Activated B cell treated with CpG ODN at 0.5 μM for 24 hours (primary cell): ENCODE measurements at regions of chr2 and their contacts with region 1.

Region 1: DNA sequence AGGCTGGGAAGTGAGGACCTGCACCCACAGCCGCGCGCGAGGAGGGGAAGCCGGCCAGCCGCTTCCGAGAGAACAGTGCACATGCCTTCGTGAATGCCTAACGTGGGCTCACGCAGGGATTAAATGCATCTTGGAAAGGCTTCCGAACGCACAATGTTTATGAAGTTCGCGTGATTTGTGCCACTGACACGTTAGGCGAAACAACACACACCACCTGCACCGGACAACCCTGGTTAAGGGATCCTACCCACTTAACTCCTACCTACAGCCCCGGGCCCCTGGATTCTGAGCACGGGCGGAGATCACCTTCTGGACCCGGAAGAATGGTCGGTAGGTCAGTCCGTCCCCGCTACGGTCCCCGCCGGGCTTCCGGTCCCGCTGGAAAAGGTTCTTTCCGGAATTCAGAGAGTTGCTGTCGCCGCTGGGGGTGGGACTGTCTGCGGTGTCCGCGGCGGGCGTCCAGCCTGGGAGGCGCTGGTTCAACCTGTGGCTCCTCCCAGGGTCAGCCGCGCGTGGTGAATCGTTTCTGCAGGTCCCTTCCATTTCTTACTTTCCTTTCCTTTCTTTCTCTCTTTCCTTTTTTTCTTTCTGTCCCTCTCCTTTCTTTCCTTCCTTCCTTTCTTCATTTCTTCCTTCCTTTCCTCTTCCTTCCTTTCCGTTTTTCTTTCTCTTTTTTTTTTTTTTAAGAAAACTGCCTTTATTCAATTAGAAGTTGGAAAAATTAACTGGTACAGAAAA is at the start of gene MTIF2:
- DNase-seq: peak; percentile 88
- ATAC-seq: peak; percentile 96
- H3K4me3 Mint-ChIP-seq: peak within 1 kb of the TSS; percentile 94
- H3K27ac Mint-ChIP-seq: peak within 1 kb of the TSS; percentile 94
- H3K4me1 Mint-ChIP-seq: peaks cover 13% of the 10 kb centered on the region
- H3K27me3 Mint-ChIP-seq: no peaks in the 10 kb centered on the region
- CTCF ChIP-seq: no peak
- total RNA-seq, gene MTIF2: 37.8 and 40.4 TPM in 2 replicates

Region 2: GRCh38 chr2:54755641-54756326 is 513.3 kb before region 1 on chr2:
- CTCF ChIA-PET with region 1: no interaction called
- POLR2A ChIA-PET with region 1: no interaction called
- intact Hi-C with region 1: loop called (anchors 5 kb)
- DNase-seq: no peak
- ATAC-seq: peak; percentile 67
- H3K4me3 Mint-ChIP-seq: peak overlapping the region; percentile 74
- H3K27ac Mint-ChIP-seq: peak overlapping the region; percentile 92
- H3K4me1 Mint-ChIP-seq: peaks cover 50% of the 10 kb centered on the region
- H3K27me3 Mint-ChIP-seq: no peaks in the 10 kb centered on the region
- CTCF ChIP-seq: no peak

Region 3: DNA sequence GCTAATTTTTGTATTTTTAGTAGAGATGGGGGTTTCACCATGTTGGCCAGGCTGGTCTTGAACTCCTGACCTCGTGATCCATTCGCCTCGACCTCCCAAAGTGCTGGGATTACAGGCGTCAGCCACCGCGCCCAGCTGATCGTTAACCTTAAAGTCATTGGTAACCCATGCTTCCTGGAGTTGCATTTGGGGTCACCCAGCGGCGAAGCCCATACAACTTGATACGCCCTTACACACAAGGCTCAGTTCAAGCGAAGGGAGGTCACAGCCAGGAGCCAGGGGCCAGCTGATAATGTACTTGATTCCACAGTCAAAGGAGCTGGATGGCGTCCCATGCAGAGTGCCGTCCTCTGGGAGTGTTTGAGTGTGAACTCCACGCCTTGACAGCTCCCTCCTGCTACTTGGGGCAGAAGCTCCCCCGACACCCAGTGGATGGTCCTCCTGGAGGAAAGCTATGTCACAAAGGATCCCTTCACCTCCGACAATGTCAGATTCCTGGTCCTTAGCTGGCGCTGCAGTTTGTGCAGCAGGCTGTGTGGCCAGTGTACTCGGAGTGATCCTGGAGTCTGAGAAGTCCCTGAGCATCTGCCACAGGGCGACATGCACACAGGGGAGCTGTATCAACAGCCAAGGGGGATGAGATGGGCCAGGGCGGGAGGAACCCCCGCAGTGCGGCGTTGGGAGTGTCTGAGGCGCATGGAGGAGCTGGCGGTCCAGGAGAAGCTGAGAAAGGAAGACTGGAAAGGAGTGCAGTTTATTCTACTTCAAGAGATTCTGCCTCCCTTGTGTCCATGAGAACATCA is 44.9 kb before region 1 on chr2:
- CTCF ChIA-PET with region 1: no interaction called
- POLR2A ChIA-PET with region 1: interaction called, 13 read pairs
- intact Hi-C with region 1: loop called (anchors 1 kb)
- DNase-seq: no peak
- ATAC-seq: no peak
- H3K4me3 Mint-ChIP-seq: peak overlapping the region; percentile 81
- H3K27ac Mint-ChIP-seq: peak overlapping the region; percentile 87
- H3K4me1 Mint-ChIP-seq: peaks cover 28% of the 10 kb centered on the region
- H3K27me3 Mint-ChIP-seq: no peaks in the 10 kb centered on the region
- CTCF ChIP-seq: no peak

Region 4: GRCh38 chr2:55232084-55232862 is 36.8 kb before region 1 on chr2 and contains the starts of genes CLHC1 and RPS27A:
- CTCF ChIA-PET with region 1: no interaction called
- POLR2A ChIA-PET with region 1: interaction called, 19 read pairs
- intact Hi-C with region 1: loop called (anchors 1 kb)
- DNase-seq: peak; percentile 92
- ATAC-seq: peak; percentile 86
- H3K4me3 Mint-ChIP-seq: peak within 1 kb of the TSS; percentile 99
- H3K27ac Mint-ChIP-seq: peak within 1 kb of the TSS; percentile 98
- H3K4me1 Mint-ChIP-seq: peaks cover 58% of the 10 kb centered on the region
- H3K27me3 Mint-ChIP-seq: no peaks in the 10 kb centered on the region
- CTCF ChIP-seq: no peak
- total RNA-seq, gene CLHC1: 7.1 and 10.5 TPM in 2 replicates
- total RNA-seq, gene RPS27A: 1,833 and 2,316 TPM in 2 replicates

Region 5: GRCh38 chr2:55282110-55282917 is 13.2 kb after region 1 on chr2:
- CTCF ChIA-PET with region 1: no interaction called
- POLR2A ChIA-PET with region 1: interaction called, 14 read pairs
- intact Hi-C with region 1: loop called (anchors 1 kb)
- DNase-seq: peak; percentile 83
- ATAC-seq: peak; percentile 99
- H3K4me3 Mint-ChIP-seq: peak overlapping the region; percentile 88
- H3K27ac Mint-ChIP-seq: peak overlapping the region; percentile 93
- H3K4me1 Mint-ChIP-seq: peaks cover 28% of the 10 kb centered on the region
- H3K27me3 Mint-ChIP-seq: no peaks in the 10 kb centered on the region
- CTCF ChIP-seq: no peak

Region 6: GRCh38 chr2:55364189-55365055 is 95.3 kb after region 1 on chr2:
- CTCF ChIA-PET with region 1: no interaction called
- POLR2A ChIA-PET with region 1: no interaction called
- intact Hi-C with region 1: no loop called
- DNase-seq: no peak
- ATAC-seq: no peak
- H3K4me3 Mint-ChIP-seq: no peak overlapping the region
- H3K27ac Mint-ChIP-seq: no peak overlapping the region
- H3K4me1 Mint-ChIP-seq: peaks cover 13% of the 10 kb centered on the region
- H3K27me3 Mint-ChIP-seq: no peaks in the 10 kb centered on the region
- CTCF ChIP-seq: no peak

Region 7: DNA sequence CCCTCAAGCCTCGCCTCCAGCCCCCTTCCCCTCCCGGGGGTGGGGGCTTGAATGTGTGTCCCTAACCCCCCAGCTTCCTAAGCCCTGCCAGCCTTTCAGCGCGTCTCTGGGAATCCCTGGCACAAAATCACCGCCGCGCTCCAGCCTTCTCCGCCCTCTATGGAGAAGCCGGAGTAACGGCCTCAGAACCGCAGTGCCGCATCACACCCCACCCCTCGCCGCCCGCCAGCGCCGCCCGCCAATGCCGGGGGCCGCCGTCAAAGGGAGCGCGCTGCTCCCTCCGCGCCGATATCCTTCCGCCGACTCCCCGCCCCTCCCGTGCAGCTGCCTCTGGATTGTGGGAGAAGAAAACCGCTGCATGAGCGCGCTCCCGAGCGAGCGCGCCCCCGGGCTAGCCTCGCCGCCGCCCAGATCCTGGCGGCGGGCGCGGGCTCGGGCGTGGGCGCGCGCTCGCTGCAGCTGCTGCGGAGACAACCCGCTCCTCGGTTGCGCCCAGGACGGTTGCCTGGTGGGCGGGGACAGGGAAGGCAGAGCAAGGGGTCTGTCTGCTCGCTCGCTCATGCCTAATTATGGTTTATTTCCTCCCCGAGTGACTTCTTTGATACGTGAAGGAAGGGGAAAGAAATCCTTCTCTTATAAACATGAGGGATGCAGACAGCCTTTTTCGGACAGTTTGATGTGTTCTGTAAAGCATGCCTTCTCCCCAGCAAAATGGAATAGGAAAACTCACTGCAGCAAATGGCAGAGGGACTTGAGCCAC is 150.8 kb after region 1 on chr2 and contains the start of gene CCDC88A:
- CTCF ChIA-PET with region 1: no interaction called
- POLR2A ChIA-PET with region 1: no interaction called
- intact Hi-C with region 1: loop called (anchors 1 kb)
- DNase-seq: peak; percentile 86
- ATAC-seq: peak; percentile 87
- H3K4me3 Mint-ChIP-seq: peak within 1 kb of the TSS; percentile 95
- H3K27ac Mint-ChIP-seq: peak within 1 kb of the TSS; percentile 92
- H3K4me1 Mint-ChIP-seq: peaks cover 46% of the 10 kb centered on the region
- H3K27me3 Mint-ChIP-seq: no peaks in the 10 kb centered on the region
- CTCF ChIP-seq: no peak
- total RNA-seq, gene CCDC88A: 25.6 and 35.6 TPM in 2 replicates

Region 8: DNA sequence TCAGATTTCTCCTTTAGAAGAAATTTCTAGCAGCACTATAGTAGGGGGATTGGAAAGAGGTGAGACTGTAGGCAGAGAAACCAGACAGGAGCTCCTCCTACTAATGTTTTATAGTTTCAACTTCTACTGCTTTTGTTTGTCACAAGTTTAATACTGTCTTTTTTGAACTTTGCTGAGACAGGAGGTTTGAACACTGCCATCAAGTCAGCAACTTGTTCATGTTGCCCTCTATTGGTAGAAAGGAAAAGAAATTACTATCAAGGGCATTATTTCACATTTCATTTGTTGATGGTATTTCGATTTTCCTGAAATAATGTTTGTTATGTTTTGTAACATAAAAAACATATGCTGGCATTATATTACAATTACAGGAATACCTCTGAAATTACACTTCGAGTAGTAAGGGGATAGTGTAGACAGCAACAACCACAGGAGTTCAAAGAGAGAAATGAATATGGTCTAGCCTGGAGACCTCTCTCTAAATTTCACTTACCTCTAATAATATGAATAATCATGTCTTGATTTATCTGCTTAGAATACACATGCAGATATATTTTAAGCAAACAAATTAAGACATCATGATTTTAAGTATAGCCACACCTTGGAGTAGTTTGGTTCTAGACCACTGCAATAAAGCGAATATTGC is 163.0 kb after region 1 on chr2:
- CTCF ChIA-PET with region 1: no interaction called
- POLR2A ChIA-PET with region 1: no interaction called
- intact Hi-C with region 1: loop called (anchors 1 kb)
- DNase-seq: no peak
- ATAC-seq: no peak
- H3K4me3 Mint-ChIP-seq: no peak overlapping the region
- H3K27ac Mint-ChIP-seq: no peak overlapping the region
- H3K4me1 Mint-ChIP-seq: no peaks in the 10 kb centered on the region
- H3K27me3 Mint-ChIP-seq: no peaks in the 10 kb centered on the region
- CTCF ChIP-seq: no peak